Tibial artery (tissue), 4 donors: ENCODE measurements at regions of chr2 and their contacts with region 1.

Region 1: GRCh38 chr2:43699761-43700160 is 23.5 kb upstream of the C1GALT1C1L start:
- DNase-seq: no peak
- H3K4me3 ChIP-seq: no peak overlapping the region
- H3K27ac ChIP-seq: no peak overlapping the region
- H3K4me1 ChIP-seq: no peaks in the 10 kb centered on the region
- H3K27me3 ChIP-seq: no peaks in the 10 kb centered on the region
- CTCF ChIP-seq: no peak

Region 2: GRCh38 chr2:42196403-42197267 is 1503.1 kb before region 1 on chr2:
- intact Hi-C with region 1: loop called (anchors 10 kb)
- DNase-seq: peak in 1 of 2 donors; percentile 28
- H3K4me3 ChIP-seq: no peak overlapping the region
- H3K27ac ChIP-seq: no peak overlapping the region
- H3K4me1 ChIP-seq: peaks cover 0 to 44% (median 15%) of the 10 kb centered on the region in 4 donors
- H3K27me3 ChIP-seq: no peaks in the 10 kb centered on the region
- CTCF ChIP-seq: peak; percentile 50 to 54

Region 3: GRCh38 chr2:43595603-43596412 is 104.0 kb before region 1 on chr2 and contains the start of gene THADA:
- intact Hi-C with region 1: no loop called
- DNase-seq: peak; percentile 99
- H3K4me3 ChIP-seq: peak within 1 kb of the TSS; percentile 72 to 88
- H3K27ac ChIP-seq: peak within 1 kb of the TSS; percentile 92 to 95
- H3K4me1 ChIP-seq: peaks cover 0 to 38% (median 14%) of the 10 kb centered on the region in 4 donors
- H3K27me3 ChIP-seq: no peaks in the 10 kb centered on the region
- CTCF ChIP-seq: no peak